ENCODE measurements at regions of chr5 and their contacts with region 1.

Region 1: DNA sequence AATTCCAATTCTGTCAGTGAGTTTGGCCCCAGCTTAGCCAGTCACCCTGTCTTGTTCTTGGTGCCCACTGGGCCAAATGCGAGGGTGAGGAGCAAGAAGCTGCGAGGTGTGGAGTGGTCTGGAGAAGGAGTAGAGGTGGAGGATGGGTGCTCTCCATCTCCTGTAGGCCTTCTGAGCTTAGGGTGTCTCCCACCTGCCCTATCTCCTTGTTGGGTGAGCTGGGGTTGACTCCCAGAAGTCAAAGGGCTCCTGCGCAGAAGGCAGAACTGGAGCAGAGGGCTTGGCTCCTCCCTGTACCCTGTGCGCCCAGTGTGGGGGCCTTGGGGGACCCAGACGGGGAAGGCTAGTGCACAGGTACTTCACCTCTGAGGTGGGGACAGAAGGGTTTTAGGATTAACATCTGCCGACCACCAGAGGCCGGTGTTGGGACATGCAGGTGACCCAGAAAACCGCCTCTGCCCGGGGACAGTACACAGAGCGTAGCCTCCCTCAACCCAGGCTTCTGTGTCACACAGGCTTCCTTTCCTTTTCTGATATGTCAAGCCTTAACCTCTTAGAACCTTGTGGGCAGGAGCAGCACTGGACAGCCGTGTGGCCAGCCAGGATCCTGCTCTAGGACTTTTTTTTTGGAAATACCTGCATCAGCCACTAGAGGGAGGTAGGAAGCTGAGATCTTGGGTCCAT is 16.9 kb downstream of the IL5 start:
- DNase-seq: peak; percentile 59 to 69
- ATAC-seq: peak; percentile 83 to 94
- H3K4me3 ChIP-seq: no peak overlapping the region
- H3K27ac ChIP-seq: peak overlapping the region in 1 of 2 experiments; percentile 62; a peak in 1 of 6 replicates
- H3K4me1 ChIP-seq: no peaks in the 10 kb centered on the region
- CTCF ChIP-seq: peak; percentile 98
- EP300 ChIP-seq: no peak
- POLR2A ChIP-seq: no peak
- RAD21 ChIP-seq: peak; percentile 70 to 83

Region 2: DNA sequence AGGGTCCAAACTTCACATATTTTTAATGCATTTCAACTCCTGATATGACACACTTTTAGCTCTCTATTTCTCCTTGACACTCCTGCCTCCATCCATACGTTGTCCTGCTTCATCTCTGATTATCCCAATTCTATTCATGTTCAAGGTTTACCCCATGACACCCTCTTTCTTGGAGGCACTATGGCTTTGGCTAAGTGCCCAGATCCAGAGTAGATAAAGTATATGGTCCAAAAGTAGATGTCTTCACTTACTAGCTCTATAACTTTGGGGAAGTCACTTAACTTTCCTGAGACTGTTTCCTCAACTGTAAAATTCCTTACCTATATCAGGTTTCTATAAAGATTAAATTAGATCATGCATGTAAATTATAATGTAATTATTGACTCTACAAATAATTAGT is 120.8 kb before region 1 on chr5:
- CTCF ChIA-PET with region 1: no interaction called
- POLR2A ChIA-PET with region 1: no interaction called
- DNase-seq: no peak
- ATAC-seq: no peak
- H3K4me3 ChIP-seq: no peak overlapping the region
- H3K27ac ChIP-seq: no peak overlapping the region
- H3K4me1 ChIP-seq: peaks cover 8% of the 10 kb centered on the region
- CTCF ChIP-seq: no peak
- EP300 ChIP-seq: no peak
- POLR2A ChIP-seq: no peak
- RAD21 ChIP-seq: no peak

Region 3: DNA sequence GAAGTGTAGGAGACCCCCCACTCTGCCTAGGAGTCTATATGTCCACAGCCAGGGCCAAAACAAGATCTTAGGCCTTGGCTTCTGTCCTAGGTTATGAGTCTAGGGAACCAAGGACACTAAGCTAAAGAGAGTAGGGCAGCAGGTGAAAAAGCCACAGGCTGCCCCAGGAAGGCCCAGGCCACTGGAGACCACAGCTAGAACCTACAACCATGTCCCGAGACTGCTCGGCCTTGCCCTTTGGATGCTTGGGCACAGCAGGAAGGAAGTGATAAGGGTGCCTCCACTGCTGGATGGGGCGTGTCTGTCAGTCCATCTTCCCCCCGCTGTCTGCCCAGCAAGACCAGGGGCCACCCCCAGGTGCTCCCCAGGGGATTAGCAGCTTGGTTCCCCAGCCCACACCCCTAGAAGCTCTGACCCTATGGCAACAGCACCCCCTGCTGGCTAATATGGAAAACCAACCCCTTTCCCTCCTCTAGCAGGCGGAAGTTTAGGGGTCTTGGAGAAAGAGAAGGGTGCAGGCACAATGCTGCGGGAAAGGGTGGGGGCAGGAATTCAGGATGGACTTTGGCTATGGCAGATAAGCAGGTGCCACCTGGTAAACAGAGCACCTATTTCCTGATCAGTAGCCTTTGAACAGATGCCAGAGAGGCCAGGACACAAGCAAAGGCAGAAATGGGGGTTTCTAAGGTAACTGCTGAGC is 25.4 kb before region 1 on chr5:
- CTCF ChIA-PET with region 1: interaction called, 14 read pairs
- POLR2A ChIA-PET with region 1: no interaction called
- DNase-seq: peak; percentile 51 to 71
- ATAC-seq: peak in 1 of 2 experiments; percentile 29; a peak in 3 of 6 replicates
- H3K4me3 ChIP-seq: no peak overlapping the region
- H3K27ac ChIP-seq: peak overlapping the region; percentile 37 to 97; a peak in 4 of 6 replicates
- H3K4me1 ChIP-seq: peaks cover 41% of the 10 kb centered on the region
- CTCF ChIP-seq: peak; percentile 89
- EP300 ChIP-seq: no peak
- POLR2A ChIP-seq: no peak
- RAD21 ChIP-seq: peak; percentile 94 to 96

Region 4: DNA sequence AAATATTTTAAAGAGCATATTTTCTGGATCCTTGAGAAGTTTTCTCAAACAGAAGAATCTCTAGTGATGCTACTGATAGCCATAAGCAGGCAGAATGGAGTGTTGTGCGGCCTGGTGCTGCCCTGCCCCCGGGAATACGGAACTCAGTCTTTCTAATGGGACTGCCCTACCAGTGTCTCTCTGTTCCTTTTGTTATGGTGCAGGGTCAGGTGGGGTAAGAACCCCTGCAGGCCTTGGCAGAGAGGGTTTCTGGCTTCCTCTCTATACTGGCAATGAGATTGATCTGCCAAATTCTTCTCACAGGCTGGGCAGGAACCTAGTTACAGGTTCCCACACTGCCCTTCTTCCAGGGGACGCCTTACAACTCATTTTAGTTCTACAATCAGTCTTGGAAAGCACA is 14.3 kb after region 1 on chr5:
- CTCF ChIA-PET with region 1: interaction called, 51 read pairs
- POLR2A ChIA-PET with region 1: no interaction called
- DNase-seq: no peak
- ATAC-seq: no peak
- H3K4me3 ChIP-seq: no peak overlapping the region
- H3K27ac ChIP-seq: no peak overlapping the region
- H3K4me1 ChIP-seq: no peaks in the 10 kb centered on the region
- CTCF ChIP-seq: no peak
- EP300 ChIP-seq: no peak
- POLR2A ChIP-seq: no peak
- RAD21 ChIP-seq: no peak

Region 5: GRCh38 chr5:132592521-132592920 is 66.1 kb after region 1 on chr5:
- CTCF ChIA-PET with region 1: interaction called, 15 read pairs
- POLR2A ChIA-PET with region 1: no interaction called
- DNase-seq: no peak
- ATAC-seq: no peak
- H3K4me3 ChIP-seq: no peak overlapping the region
- H3K27ac ChIP-seq: no peak overlapping the region
- H3K4me1 ChIP-seq: peaks cover 10% of the 10 kb centered on the region; the same call in 1 of the 3 replicates
- CTCF ChIP-seq: no peak
- EP300 ChIP-seq: no peak
- POLR2A ChIP-seq: no peak
- RAD21 ChIP-seq: no peak

Measured in A549 (cell line).